ENCODE measurements at regions of chr6 and their contacts with region 1.

Region 1: DNA sequence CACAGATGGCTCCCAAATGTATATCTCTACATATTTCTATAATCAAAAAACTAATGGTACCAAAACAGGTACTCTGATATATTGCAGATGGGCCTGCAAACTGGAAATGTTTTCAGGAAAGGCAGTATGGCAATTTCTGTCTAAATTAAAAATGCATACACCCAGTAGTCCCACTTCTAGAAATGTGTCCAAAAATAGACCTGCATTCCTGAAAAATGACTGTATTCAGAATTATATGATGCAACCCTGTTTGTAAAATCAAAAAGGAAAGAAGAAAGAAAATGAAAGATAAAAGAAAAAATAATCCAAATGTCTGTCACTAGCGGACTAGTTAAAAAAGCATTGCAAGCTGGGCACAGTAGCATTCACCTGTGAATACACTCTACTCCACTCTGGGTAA is 12.9 kb upstream of the MICB start:
- DNase-seq: no peak
- ATAC-seq: no peak
- H3K4me3 ChIP-seq: no peak overlapping the region
- H3K27ac ChIP-seq: no peak overlapping the region
- H3K4me1 ChIP-seq: peaks cover 4% of the 10 kb centered on the region; the same call in 1 of the 2 replicates
- H3K27me3 ChIP-seq: no peaks in the 10 kb centered on the region
- CTCF ChIP-seq: no peak
- EP300 ChIP-seq: no peak
- POLR2A ChIP-seq: no peak
- RAD21 ChIP-seq: no peak

Region 2: GRCh38 chr6:30656513-30656912 is 828.5 kb before region 1 on chr6:
- CTCF ChIA-PET with region 1: no interaction called
- POLR2A ChIA-PET with region 1: no interaction called
- RAD21 ChIA-PET with region 1: no interaction called
- SMC1A ChIA-PET with region 1: no interaction called
- in situ Hi-C with region 1: no loop called
- intact Hi-C with region 1: no loop called
- DNase-seq: no peak
- ATAC-seq: no peak
- H3K4me3 ChIP-seq: no peak overlapping the region
- H3K27ac ChIP-seq: no peak overlapping the region
- H3K4me1 ChIP-seq: no peaks in the 10 kb centered on the region
- H3K27me3 ChIP-seq: no peaks in the 10 kb centered on the region
- CTCF ChIP-seq: no peak
- EP300 ChIP-seq: no peak
- POLR2A ChIP-seq: no peak
- RAD21 ChIP-seq: no peak

Region 3: GRCh38 chr6:30981942-30982772 is 502.9 kb before region 1 on chr6:
- CTCF ChIA-PET with region 1: no interaction called
- POLR2A ChIA-PET with region 1: no interaction called
- RAD21 ChIA-PET with region 1: no interaction called
- SMC1A ChIA-PET with region 1: no interaction called
- in situ Hi-C with region 1: no loop called
- intact Hi-C with region 1: no loop called
- DNase-seq: no peak
- ATAC-seq: no peak
- H3K4me3 ChIP-seq: no peak overlapping the region
- H3K27ac ChIP-seq: no peak overlapping the region
- H3K4me1 ChIP-seq: 0 out of 2 replicates have a peak, but pooled peaks cover 4% of the 10 kb centered on the region
- H3K27me3 ChIP-seq: peaks cover 0 to 2% of the 10 kb centered on the region in 2 experiments; a peak in 3 of 4 replicates
- CTCF ChIP-seq: no peak
- EP300 ChIP-seq: no peak
- POLR2A ChIP-seq: no peak
- RAD21 ChIP-seq: no peak

Region 4: DNA sequence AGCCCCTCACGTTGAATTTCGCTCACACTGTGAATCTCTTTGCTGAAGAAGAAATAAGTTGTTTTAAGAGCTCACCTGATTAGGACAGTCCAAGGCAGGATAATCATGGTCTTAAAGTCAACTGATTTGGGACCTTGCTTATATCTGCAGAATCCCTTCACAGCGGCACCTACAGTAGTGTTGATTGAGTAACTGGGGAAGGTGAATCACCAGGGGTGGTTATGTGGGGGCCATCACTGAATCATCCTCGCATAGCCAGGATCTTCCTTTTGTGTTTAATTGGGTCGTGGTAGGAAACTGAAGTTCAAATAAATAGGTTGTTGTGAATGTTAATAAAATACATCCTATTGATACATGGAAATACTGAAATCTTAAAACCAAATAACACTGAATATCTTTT is 101.9 kb before region 1 on chr6:
- CTCF ChIA-PET with region 1: no interaction called
- POLR2A ChIA-PET with region 1: no interaction called
- RAD21 ChIA-PET with region 1: no interaction called
- SMC1A ChIA-PET with region 1: no interaction called
- in situ Hi-C with region 1: no loop called
- intact Hi-C with region 1: loop called (anchors 2 kb)
- DNase-seq: no peak
- ATAC-seq: no peak
- H3K4me3 ChIP-seq: no peak overlapping the region
- H3K27ac ChIP-seq: no peak overlapping the region
- H3K4me1 ChIP-seq: no peaks in the 10 kb centered on the region
- H3K27me3 ChIP-seq: 0 out of 4 replicates have a peak, but pooled peaks cover 0 to 3% of the 10 kb centered on the region in 2 experiments
- CTCF ChIP-seq: no peak
- EP300 ChIP-seq: no peak
- POLR2A ChIP-seq: no peak
- RAD21 ChIP-seq: no peak

Region 5: GRCh38 chr6:32087574-32088486 is 602.8 kb after region 1 on chr6:
- CTCF ChIA-PET with region 1: no interaction called
- POLR2A ChIA-PET with region 1: no interaction called
- RAD21 ChIA-PET with region 1: no interaction called
- SMC1A ChIA-PET with region 1: no interaction called
- in situ Hi-C with region 1: no loop called
- intact Hi-C with region 1: no loop called
- DNase-seq: no peak
- ATAC-seq: peak; percentile 86
- H3K4me3 ChIP-seq: no peak overlapping the region
- H3K27ac ChIP-seq: no peak overlapping the region
- H3K4me1 ChIP-seq: peaks cover 16% of the 10 kb centered on the region
- H3K27me3 ChIP-seq: peaks cover 2 to 4% of the 10 kb centered on the region in 2 experiments
- CTCF ChIP-seq: peak; percentile 15 to 65 (median 57); a peak in 5 of 6 replicates
- EP300 ChIP-seq: no peak
- POLR2A ChIP-seq: no peak
- RAD21 ChIP-seq: peak; percentile 48

Region 6: DNA sequence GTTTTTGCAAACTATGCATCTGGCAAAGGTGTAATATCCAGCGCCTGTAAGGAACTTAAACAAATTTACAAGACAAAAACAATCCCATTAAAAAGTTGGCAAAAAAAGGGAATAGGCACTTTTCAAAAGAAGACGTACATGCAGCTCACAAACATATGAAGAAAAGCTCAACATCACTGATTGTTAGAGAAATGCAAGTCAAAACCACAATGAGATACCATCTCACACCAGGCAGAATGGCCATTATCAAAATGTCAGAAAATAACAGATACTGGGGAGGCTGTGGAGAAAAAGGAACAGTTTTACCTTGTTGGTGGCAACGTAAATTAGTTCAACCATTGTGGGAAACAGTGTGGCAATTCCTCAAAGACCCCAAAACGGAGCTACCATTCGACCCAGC is 832.5 kb after region 1 on chr6:
- CTCF ChIA-PET with region 1: no interaction called
- POLR2A ChIA-PET with region 1: no interaction called
- RAD21 ChIA-PET with region 1: no interaction called
- SMC1A ChIA-PET with region 1: no interaction called
- in situ Hi-C with region 1: no loop called
- intact Hi-C with region 1: no loop called
- DNase-seq: no peak
- ATAC-seq: no peak
- H3K4me3 ChIP-seq: no peak overlapping the region
- H3K27ac ChIP-seq: no peak overlapping the region
- H3K4me1 ChIP-seq: no peaks in the 10 kb centered on the region
- H3K27me3 ChIP-seq: peaks cover 0 to 5% of the 10 kb centered on the region in 2 experiments; a peak in 2 of 4 replicates
- CTCF ChIP-seq: no peak
- EP300 ChIP-seq: no peak
- POLR2A ChIP-seq: no peak
- RAD21 ChIP-seq: no peak